ENCODE measurements at regions of chr4 and their contacts with region 1.

Region 1: DNA sequence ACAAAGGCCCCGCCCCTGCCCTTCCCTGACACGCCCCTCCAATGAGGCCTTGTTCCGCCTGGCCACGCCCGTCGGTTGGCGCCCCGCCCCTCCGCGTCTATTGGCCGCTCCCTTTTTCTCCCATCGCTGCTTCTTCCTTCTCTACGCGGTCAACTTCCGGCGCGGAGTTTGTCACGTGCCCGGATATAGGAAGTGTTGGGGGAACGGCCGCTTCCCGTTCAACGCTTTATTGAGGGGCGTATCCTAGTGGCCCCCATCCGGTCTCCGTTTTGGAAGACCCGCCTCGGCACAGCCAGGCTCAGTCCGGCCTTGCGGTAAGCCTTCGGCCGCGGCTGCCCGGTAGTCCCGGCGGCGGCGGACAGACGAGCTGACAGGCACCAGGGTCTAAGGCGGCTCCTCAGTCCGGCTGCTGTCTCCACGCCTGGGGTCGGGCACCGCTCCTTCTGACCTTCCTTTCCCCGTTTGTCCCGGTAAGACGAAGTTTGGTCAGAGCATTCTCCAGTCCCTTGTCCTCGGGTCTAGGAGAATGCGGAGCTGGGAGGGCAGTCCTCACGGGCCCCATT is at the start of gene EXOC1:
- DNase-seq: peak; percentile 97
- H3K4me3 ChIP-seq: peak within 1 kb of the TSS; percentile 95
- H3K27ac ChIP-seq: peak within 1 kb of the TSS; percentile 26
- H3K4me1 ChIP-seq: peaks cover 17% of the 10 kb centered on the region
- CTCF ChIP-seq: no peak
- total RNA-seq, gene EXOC1: 23.7 and 29.1 TPM in 2 replicates

Region 2: GRCh38 chr4:55458164-55458563 is 395.4 kb before region 1 on chr4:
- CTCF ChIA-PET with region 1: no interaction called
- POLR2A ChIA-PET with region 1: no interaction called
- intact Hi-C with region 1: no loop called
- DNase-seq: no peak
- H3K4me3 ChIP-seq: no peak overlapping the region
- H3K27ac ChIP-seq: no peak overlapping the region
- H3K4me1 ChIP-seq: no peaks in the 10 kb centered on the region
- CTCF ChIP-seq: no peak

Region 3: DNA sequence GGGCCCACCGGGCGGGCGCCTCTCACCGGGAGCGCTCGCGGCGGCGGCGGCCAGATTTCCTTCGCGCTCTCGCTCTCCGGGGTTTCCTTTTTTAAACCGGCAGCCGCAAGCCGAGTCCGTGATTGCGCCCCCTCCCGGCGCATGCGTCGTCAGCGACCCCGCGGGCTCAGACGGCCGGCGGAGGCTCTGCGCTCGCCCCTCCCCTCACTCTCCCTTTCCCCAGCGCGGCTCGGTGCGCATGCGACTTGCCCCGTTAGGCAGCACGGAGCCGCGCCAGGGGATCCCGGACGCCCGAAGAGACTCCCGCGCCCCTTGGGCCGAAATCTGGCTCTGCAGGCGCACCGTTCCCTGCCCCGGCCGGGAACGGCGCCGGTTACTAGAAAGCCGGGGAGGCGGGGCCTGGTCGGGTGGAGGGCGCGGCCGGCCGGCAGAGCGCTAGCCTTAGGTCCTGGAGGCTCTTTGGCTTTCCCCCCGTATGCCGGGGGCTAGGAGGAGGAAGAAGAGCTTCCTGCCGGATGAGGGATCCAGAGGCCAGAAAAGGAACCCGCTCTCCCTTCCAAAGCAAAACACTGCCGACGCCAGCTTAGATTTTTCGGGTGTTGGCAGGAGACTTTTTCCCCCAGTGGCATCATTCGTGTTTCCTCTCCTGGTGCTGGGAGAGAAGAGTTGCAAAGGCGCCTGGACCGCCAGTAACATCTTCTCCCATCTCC is 306.7 kb before region 1 on chr4 and contains the start of gene CLOCK:
- CTCF ChIA-PET with region 1: no interaction called
- POLR2A ChIA-PET with region 1: no interaction called
- intact Hi-C with region 1: loop called (anchors 5 kb)
- DNase-seq: peak; percentile 86
- H3K4me3 ChIP-seq: peak within 1 kb of the TSS; percentile 79
- H3K27ac ChIP-seq: peak within 1 kb of the TSS; percentile 45
- H3K4me1 ChIP-seq: peaks cover 7% of the 10 kb centered on the region
- CTCF ChIP-seq: peak; percentile 68
- total RNA-seq, gene CLOCK: 1.9 and 2.0 TPM in 2 replicates

Region 4: GRCh38 chr4:56026596-56026995 is 173.0 kb after region 1 on chr4:
- CTCF ChIA-PET with region 1: no interaction called
- POLR2A ChIA-PET with region 1: interaction called, 10 read pairs
- intact Hi-C with region 1: no loop called
- DNase-seq: no peak
- H3K4me3 ChIP-seq: no peak overlapping the region
- H3K27ac ChIP-seq: no peak overlapping the region
- H3K4me1 ChIP-seq: no peaks in the 10 kb centered on the region
- CTCF ChIP-seq: no peak

Measured in OCI-LY7 (cell line).